ENCODE measurements at regions of chr2 and their contacts with region 1.

Region 1: GRCh38 chr2:102082571-102083392 is 59.8 kb upstream of the IL1R1 start:
- DNase-seq: peak; percentile 41
- H3K4me3 Mint-ChIP-seq: peak overlapping the region; percentile 64
- H3K27ac Mint-ChIP-seq: peak overlapping the region; percentile 89
- H3K4me1 Mint-ChIP-seq: peaks cover 37% of the 10 kb centered on the region
- H3K27me3 Mint-ChIP-seq: peaks cover 6% of the 10 kb centered on the region

Region 2: GRCh38 chr2:101704046-101704466 is 378.7 kb before region 1 on chr2:
- intact Hi-C with region 1: loop called (anchors 5 kb)
- DNase-seq: no peak
- H3K4me3 Mint-ChIP-seq: peak overlapping the region; percentile 78
- H3K27ac Mint-ChIP-seq: peak overlapping the region; percentile 82
- H3K4me1 Mint-ChIP-seq: peaks cover 64% of the 10 kb centered on the region
- H3K27me3 Mint-ChIP-seq: no peaks in the 10 kb centered on the region

Region 3: DNA sequence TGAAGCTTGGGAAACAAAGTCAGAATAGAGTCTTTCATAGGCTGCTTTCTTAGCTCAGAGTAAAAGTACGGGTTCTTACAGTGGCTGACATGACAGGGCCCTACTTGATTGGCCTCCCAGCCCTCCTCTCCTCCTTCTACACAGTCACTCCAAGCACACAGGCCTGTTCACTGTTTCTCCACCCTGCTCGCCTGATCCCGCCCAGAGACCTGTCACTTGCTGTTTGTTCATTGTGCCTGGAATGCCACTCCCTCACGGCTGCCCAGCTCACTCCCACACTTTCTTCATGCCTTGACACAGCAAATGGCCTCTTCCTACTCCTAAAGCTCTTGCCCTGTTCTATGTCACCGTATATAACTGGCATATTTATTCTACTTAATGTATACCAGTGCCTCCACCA is 280.5 kb before region 1 on chr2:
- intact Hi-C with region 1: no loop called
- DNase-seq: no peak
- H3K4me3 Mint-ChIP-seq: no peak overlapping the region
- H3K27ac Mint-ChIP-seq: peak overlapping the region; percentile 66
- H3K4me1 Mint-ChIP-seq: peaks cover 46% of the 10 kb centered on the region
- H3K27me3 Mint-ChIP-seq: no peaks in the 10 kb centered on the region

Region 4: DNA sequence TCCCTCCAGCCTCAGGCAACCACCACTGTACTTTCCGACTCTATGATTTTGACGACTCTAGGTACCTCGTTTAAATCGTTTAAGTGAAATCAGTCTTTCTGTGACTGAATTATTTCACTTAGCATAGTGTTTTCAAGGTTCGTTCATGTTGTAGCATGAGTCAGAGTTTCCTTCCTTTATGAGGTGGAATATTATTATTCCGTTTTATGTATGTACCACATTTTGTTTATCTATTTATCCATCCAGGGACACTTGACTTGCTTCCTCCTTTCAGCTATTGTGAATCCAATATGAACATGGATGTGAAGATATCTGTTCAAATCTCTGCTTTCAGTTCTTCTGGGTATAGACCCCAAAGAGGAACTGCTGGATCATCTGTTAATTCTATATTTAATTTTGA is 71.9 kb before region 1 on chr2:
- intact Hi-C with region 1: no loop called
- DNase-seq: no peak
- H3K4me3 Mint-ChIP-seq: no peak overlapping the region
- H3K27ac Mint-ChIP-seq: peak overlapping the region; percentile 27
- H3K4me1 Mint-ChIP-seq: peaks cover 28% of the 10 kb centered on the region
- H3K27me3 Mint-ChIP-seq: peaks cover 2% of the 10 kb centered on the region

Region 5: DNA sequence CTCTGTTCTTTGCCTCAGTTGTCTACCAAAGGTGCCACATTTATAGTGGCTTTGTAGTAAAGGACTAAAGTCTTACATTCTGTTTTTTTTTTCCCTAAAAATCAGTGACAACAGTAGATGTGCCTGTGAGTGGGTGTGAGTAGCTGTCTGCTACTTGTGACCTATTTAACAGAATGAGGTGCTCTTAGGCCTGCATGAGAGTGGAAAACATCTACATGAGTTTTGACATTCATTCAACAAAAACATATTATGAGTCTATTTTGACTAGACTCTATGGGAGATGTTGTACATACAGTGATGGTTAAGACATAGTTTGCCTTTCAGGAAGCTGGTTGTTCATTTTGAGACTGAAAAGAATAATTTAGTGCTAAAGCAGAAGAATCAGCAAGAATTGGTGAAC is 54.3 kb before region 1 on chr2:
- intact Hi-C with region 1: loop called (anchors 1 kb)
- DNase-seq: no peak
- H3K4me3 Mint-ChIP-seq: no peak overlapping the region
- H3K27ac Mint-ChIP-seq: peak overlapping the region; percentile 40
- H3K4me1 Mint-ChIP-seq: peaks cover 57% of the 10 kb centered on the region
- H3K27me3 Mint-ChIP-seq: peaks cover 2% of the 10 kb centered on the region

Region 6: GRCh38 chr2:102103992-102104871 is 21.4 kb after region 1 on chr2:
- intact Hi-C with region 1: loop called (anchors 1 kb)
- DNase-seq: peak; percentile 22
- H3K4me3 Mint-ChIP-seq: peak overlapping the region; percentile 72
- H3K27ac Mint-ChIP-seq: peak overlapping the region; percentile 13
- H3K4me1 Mint-ChIP-seq: peaks cover 24% of the 10 kb centered on the region
- H3K27me3 Mint-ChIP-seq: peaks cover 17% of the 10 kb centered on the region

Region 7: DNA sequence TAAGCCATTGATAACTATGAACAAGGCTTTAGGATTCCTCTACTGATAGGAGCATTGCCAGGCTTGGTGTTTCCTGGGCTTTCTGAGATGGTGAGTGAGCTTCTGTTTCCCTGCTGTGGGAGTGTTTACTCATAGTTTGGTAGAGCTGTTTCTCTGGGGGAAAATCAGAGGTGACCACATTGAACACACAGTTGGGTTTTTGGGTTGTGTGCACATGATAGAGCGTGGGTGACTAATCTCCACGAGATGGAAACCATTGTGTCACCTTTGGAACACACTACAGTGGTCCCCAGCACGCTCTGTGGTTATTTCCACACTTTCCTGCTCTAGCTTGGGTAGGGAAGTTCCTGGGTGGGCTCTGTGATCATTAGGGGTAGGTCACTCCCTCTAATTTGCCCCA is 65.2 kb after region 1 on chr2:
- intact Hi-C with region 1: loop called (anchors 2 kb)
- DNase-seq: no peak
- H3K4me3 Mint-ChIP-seq: no peak overlapping the region
- H3K27ac Mint-ChIP-seq: peak overlapping the region; percentile 63
- H3K4me1 Mint-ChIP-seq: peaks cover 13% of the 10 kb centered on the region
- H3K27me3 Mint-ChIP-seq: peaks cover 10% of the 10 kb centered on the region

Region 8: GRCh38 chr2:102355526-102356380 is 273.0 kb after region 1 on chr2 and contains the start of gene IL18R1:
- intact Hi-C with region 1: loop called (anchors 1 kb)
- DNase-seq: peak; percentile 71
- H3K4me3 Mint-ChIP-seq: peak within 1 kb of the TSS; percentile 97
- H3K27ac Mint-ChIP-seq: peak within 1 kb of the TSS; percentile 96
- H3K4me1 Mint-ChIP-seq: peaks cover 47% of the 10 kb centered on the region
- H3K27me3 Mint-ChIP-seq: no peaks in the 10 kb centered on the region
- total RNA-seq, gene IL18R1: 57.8 and 61.3 TPM in 2 replicates

Region 9: DNA sequence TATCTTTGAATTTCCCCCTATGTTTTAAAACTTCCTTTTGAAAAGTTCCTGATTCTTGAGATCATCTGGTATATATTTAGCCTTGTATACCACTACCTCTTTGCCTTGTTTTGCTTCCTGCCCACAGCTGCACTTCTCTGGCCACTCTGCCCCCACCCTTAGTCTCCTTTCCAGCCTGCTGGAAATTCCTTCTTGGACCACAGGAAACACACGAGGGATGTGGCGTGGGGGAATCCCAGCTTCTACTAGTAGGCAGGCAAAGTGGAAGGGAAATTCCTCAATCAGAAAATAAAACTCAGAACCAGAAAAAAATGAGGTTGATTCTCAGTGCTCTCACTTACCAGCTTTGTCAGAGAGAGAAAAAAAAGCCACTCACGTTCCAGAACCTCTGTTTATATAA is 353.5 kb after region 1 on chr2:
- intact Hi-C with region 1: loop called (anchors 1 kb)
- DNase-seq: no peak
- H3K4me3 Mint-ChIP-seq: peak overlapping the region; percentile 53
- H3K27ac Mint-ChIP-seq: peak overlapping the region; percentile 86
- H3K4me1 Mint-ChIP-seq: peaks cover 33% of the 10 kb centered on the region
- H3K27me3 Mint-ChIP-seq: no peaks in the 10 kb centered on the region